PC-3 (cell line): ENCODE measurements at regions of chr2 and their contacts with region 1.

Region 1: DNA sequence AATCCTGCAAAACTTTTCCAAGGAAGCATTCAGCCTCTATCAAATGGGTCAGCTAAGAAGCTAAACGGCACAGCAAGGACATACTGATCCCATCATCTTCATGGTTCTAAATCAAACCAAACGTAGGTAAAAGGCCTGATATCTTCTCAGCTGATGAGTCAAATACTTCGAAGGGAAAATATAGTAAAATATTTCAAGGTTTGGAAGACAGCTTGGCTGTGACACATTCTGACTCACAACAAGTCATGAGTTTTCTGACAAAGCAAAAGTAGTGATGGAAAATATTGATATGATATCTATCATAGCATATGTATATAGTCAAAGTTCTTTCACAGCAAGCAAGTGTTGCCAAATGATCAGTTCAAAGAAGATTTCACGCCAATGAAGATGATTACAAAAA is 31.5 kb downstream of the DOCK10 start:
- DNase-seq: peak; percentile 91
- ATAC-seq: peak; percentile 88
- H3K4me3 ChIP-seq: peak overlapping the region; percentile 44; the same call in 1 of the 2 replicates
- H3K27ac ChIP-seq: peak overlapping the region; percentile 90
- H3K4me1 ChIP-seq: peaks cover 33% of the 10 kb centered on the region
- H3K27me3 ChIP-seq: no peaks in the 10 kb centered on the region
- CTCF ChIP-seq: no peak

Region 2: GRCh38 chr2:224982910-224983711 is 27.7 kb before region 1 on chr2:
- CTCF ChIA-PET with region 1: no interaction called
- POLR2A ChIA-PET with region 1: no interaction called
- intact Hi-C with region 1: no loop called
- DNase-seq: no peak
- ATAC-seq: no peak
- H3K4me3 ChIP-seq: no peak overlapping the region
- H3K27ac ChIP-seq: no peak overlapping the region
- H3K4me1 ChIP-seq: no peaks in the 10 kb centered on the region; the same call in 1 of the 2 replicates
- H3K27me3 ChIP-seq: no peaks in the 10 kb centered on the region
- CTCF ChIP-seq: no peak

Region 3: GRCh38 chr2:225041851-225042799 is 31.3 kb after region 1 on chr2 and contains the start of gene DOCK10:
- CTCF ChIA-PET with region 1: no interaction called
- POLR2A ChIA-PET with region 1: no interaction called
- intact Hi-C with region 1: loop called (anchors 1 kb)
- DNase-seq: peak; percentile 35
- ATAC-seq: peak; percentile 39
- H3K4me3 ChIP-seq: peak within 1 kb of the TSS; percentile 86
- H3K27ac ChIP-seq: peak within 1 kb of the TSS; percentile 7
- H3K4me1 ChIP-seq: peaks cover 10% of the 10 kb centered on the region; the same call in 1 of the 2 replicates
- H3K27me3 ChIP-seq: no peaks in the 10 kb centered on the region
- CTCF ChIP-seq: no peak; the same call in 1 of the 2 replicates
- total RNA-seq, gene DOCK10: 23.1 and 38.5 TPM in 2 replicates

Region 4: DNA sequence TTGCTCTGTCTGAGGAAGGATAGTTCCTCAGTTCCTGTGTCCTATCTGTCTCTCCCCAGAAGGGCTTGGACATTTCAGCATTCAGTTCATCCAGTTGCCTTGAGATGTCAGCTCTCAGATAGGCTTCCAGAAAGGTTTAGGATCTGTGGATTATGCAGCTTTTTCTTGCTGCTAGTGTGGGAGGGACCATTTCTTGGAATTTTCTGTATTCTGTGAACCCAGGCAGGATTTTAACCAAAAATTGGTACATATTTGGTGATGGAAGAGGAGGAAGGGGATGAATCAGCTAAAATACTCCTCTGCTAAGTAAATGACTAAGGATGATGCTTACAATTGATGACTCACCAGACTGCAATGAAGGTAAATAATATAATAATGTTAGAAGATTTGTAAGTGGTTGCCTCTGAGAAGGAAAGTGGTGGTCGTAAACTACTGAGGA is 90.1 kb after region 1 on chr2:
- CTCF ChIA-PET with region 1: no interaction called
- POLR2A ChIA-PET with region 1: no interaction called
- intact Hi-C with region 1: loop called (anchors 2 kb)
- DNase-seq: peak; percentile 94
- ATAC-seq: peak; percentile 58
- H3K4me3 ChIP-seq: peak overlapping the region; percentile 46
- H3K27ac ChIP-seq: peak overlapping the region; percentile 98
- H3K4me1 ChIP-seq: peaks cover 71% of the 10 kb centered on the region
- H3K27me3 ChIP-seq: no peaks in the 10 kb centered on the region
- CTCF ChIP-seq: no peak

Region 5: GRCh38 chr2:225223301-225223700 is 212.5 kb after region 1 on chr2:
- CTCF ChIA-PET with region 1: no interaction called
- POLR2A ChIA-PET with region 1: no interaction called
- intact Hi-C with region 1: loop called (anchors 10 kb)
- DNase-seq: peak; percentile 76
- ATAC-seq: peak; percentile 96
- H3K4me3 ChIP-seq: no peak overlapping the region; the same call in 1 of the 2 replicates
- H3K27ac ChIP-seq: peak overlapping the region; percentile 88
- H3K4me1 ChIP-seq: peaks cover 19% of the 10 kb centered on the region
- H3K27me3 ChIP-seq: no peaks in the 10 kb centered on the region
- CTCF ChIP-seq: no peak

Region 6: GRCh38 chr2:225282858-225283710 is 272.3 kb after region 1 on chr2:
- CTCF ChIA-PET with region 1: no interaction called
- POLR2A ChIA-PET with region 1: no interaction called
- intact Hi-C with region 1: loop called (anchors 10 kb)
- DNase-seq: peak; percentile 75
- ATAC-seq: peak; percentile 79
- H3K4me3 ChIP-seq: no peak overlapping the region
- H3K27ac ChIP-seq: no peak overlapping the region
- H3K4me1 ChIP-seq: peaks cover 9% of the 10 kb centered on the region
- H3K27me3 ChIP-seq: no peaks in the 10 kb centered on the region
- CTCF ChIP-seq: peak; percentile 84